ENCODE measurements at regions of chr10 and their contacts with region 1.

Region 1: GRCh38 chr10:74991440-74992130 is 119.9 kb upstream of the SAMD8 start:
- DNase-seq: no peak
- H3K4me3 Mint-ChIP-seq: no peak overlapping the region
- H3K27ac Mint-ChIP-seq: no peak overlapping the region
- H3K4me1 Mint-ChIP-seq: peaks cover 34% of the 10 kb centered on the region
- H3K27me3 Mint-ChIP-seq: no peaks in the 10 kb centered on the region

Region 2: GRCh38 chr10:74977913-74978847 is 13.4 kb before region 1 on chr10:
- CTCF ChIA-PET with region 1: interaction called, 14 read pairs
- POLR2A ChIA-PET with region 1: no interaction called
- DNase-seq: peak; percentile 75
- H3K4me3 Mint-ChIP-seq: peak overlapping the region; percentile 32
- H3K27ac Mint-ChIP-seq: peak overlapping the region; percentile 65
- H3K4me1 Mint-ChIP-seq: peaks cover 27% of the 10 kb centered on the region
- H3K27me3 Mint-ChIP-seq: no peaks in the 10 kb centered on the region

Region 3: GRCh38 chr10:75159519-75159918 is 167.9 kb after region 1 on chr10:
- CTCF ChIA-PET with region 1: no interaction called
- POLR2A ChIA-PET with region 1: no interaction called
- DNase-seq: no peak
- H3K4me3 Mint-ChIP-seq: no peak overlapping the region
- H3K27ac Mint-ChIP-seq: peak overlapping the region; percentile 60
- H3K4me1 Mint-ChIP-seq: peaks cover 20% of the 10 kb centered on the region
- H3K27me3 Mint-ChIP-seq: no peaks in the 10 kb centered on the region

Measured in activated CD4-positive, alpha-beta T cell treated with anti-CD3 and anti-CD28 coated beads, Interleukin-2, amount 10 ng/mL, durations not matched to agents 7 days and 5 days (primary cell).